ENCODE measurements at regions of chr9 and their contacts with region 1.

Region 1: GRCh38 chr9:32378993-32379729 is 5.3 kb upstream of the ACO1 start:
- DNase-seq: peak; percentile 86
- H3K4me3 ChIP-seq: no peak overlapping the region
- H3K27ac ChIP-seq: no peak overlapping the region
- H3K4me1 ChIP-seq: peaks cover 7% of the 10 kb centered on the region
- H3K27me3 ChIP-seq: peaks cover 13% of the 10 kb centered on the region
- CTCF ChIP-seq: peak; percentile 84

Region 2: DNA sequence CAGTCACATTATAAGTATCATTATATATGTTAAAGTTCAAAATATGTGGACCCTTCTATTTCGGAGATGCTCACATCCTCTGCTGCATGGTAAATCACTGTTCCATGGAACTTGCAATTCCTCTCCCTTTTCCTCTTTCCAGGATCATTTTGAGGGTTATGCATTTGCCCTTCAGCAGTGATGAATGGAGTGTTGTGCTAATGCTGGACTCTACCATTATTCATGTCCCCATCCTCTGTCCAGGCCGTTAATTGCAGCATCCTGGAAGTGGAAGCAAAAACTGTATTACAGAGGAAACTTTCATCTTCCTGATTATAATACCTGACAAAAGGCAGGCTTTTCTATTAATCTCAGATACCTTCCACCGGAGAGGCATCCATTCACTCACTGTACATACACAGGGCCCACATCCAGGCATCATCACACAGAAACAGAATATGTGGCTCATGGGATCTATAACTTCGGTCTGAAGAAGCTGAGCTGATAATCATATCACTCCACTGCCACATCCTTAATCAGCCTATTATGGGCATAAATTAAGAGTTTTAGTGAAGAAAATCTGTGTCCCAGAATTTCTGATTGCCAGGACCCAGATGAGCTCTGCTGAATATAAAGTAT is 59.7 kb before region 1 on chr9:
- CTCF ChIA-PET with region 1: no interaction called
- POLR2A ChIA-PET with region 1: no interaction called
- intact Hi-C with region 1: loop called (anchors 10 kb)
- DNase-seq: no peak
- H3K4me3 ChIP-seq: no peak overlapping the region
- H3K27ac ChIP-seq: no peak overlapping the region
- H3K4me1 ChIP-seq: no peaks in the 10 kb centered on the region
- H3K27me3 ChIP-seq: no peaks in the 10 kb centered on the region
- CTCF ChIP-seq: no peak

Region 3: GRCh38 chr9:32442433-32442832 is 63.3 kb after region 1 on chr9:
- CTCF ChIA-PET with region 1: no interaction called
- POLR2A ChIA-PET with region 1: no interaction called
- intact Hi-C with region 1: no loop called
- DNase-seq: no peak
- H3K4me3 ChIP-seq: no peak overlapping the region
- H3K27ac ChIP-seq: no peak overlapping the region
- H3K4me1 ChIP-seq: no peaks in the 10 kb centered on the region
- H3K27me3 ChIP-seq: no peaks in the 10 kb centered on the region
- CTCF ChIP-seq: no peak

Region 4: GRCh38 chr9:32526041-32526706 is 147.0 kb after region 1 on chr9 and contains the start of gene RIGI:
- CTCF ChIA-PET with region 1: interaction called, 32 read pairs
- POLR2A ChIA-PET with region 1: no interaction called
- intact Hi-C with region 1: loop called (anchors 2 kb)
- DNase-seq: peak; percentile 96
- H3K4me3 ChIP-seq: peak within 1 kb of the TSS; percentile 69
- H3K27ac ChIP-seq: peak within 1 kb of the TSS; percentile 73
- H3K4me1 ChIP-seq: peaks cover 13% of the 10 kb centered on the region
- H3K27me3 ChIP-seq: no peaks in the 10 kb centered on the region
- CTCF ChIP-seq: peak; percentile 70
- total RNA-seq, gene RIGI: 5.9 and 7.4 TPM in 2 replicates

Region 5: GRCh38 chr9:32579706-32580331 is 200.7 kb after region 1 on chr9:
- CTCF ChIA-PET with region 1: interaction called, 79 read pairs
- POLR2A ChIA-PET with region 1: no interaction called
- intact Hi-C with region 1: loop called (anchors 1 kb)
- DNase-seq: peak; percentile 61
- H3K4me3 ChIP-seq: no peak overlapping the region
- H3K27ac ChIP-seq: no peak overlapping the region
- H3K4me1 ChIP-seq: no peaks in the 10 kb centered on the region
- H3K27me3 ChIP-seq: no peaks in the 10 kb centered on the region
- CTCF ChIP-seq: peak; percentile 92

Region 6: DNA sequence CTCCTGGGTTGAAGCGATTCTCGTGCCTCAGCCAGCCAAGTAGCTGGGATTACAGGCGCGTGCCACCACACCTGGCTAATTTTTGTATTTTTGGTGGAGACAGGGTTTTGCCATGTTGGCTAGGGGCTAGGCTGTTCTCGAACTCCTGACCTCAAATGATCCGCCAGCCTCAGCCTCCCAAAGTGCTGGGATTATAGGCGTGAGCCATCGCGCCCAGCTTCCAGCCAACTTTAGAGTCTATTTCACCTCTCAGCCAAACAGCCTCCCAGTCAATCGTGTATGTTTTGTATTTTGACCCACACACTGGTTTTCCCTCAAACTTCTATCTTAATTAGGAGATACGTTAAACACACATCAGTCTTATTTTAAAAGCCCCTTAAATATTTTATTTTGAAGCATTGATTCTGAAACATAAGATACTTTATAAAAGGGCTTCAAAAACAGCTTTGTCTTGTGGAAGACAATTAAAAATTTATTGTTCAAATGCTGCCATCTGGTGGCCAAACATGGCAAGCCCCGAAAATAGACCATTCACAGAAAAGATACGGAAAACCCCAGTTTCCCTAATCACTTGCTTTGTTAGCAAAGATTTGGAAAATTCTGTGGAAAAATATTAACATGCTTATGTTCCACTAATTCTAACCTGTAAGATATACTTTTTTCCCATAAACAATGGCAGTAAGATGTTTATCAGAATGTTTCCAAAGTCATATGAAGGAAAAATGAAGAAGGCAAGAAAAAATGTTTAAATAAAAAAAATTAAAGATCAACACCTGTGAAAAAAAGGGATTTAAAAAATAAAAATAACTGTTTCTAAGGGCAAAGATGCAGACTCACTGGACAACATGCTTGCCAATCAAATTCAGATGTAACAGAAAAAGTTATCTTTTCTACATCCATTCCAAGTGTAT is 589.2 kb after region 1 on chr9:
- CTCF ChIA-PET with region 1: interaction called, 7 read pairs
- POLR2A ChIA-PET with region 1: no interaction called
- intact Hi-C with region 1: loop called (anchors 1 kb)
- DNase-seq: peak; percentile 57
- H3K4me3 ChIP-seq: no peak overlapping the region
- H3K27ac ChIP-seq: no peak overlapping the region
- H3K4me1 ChIP-seq: peaks cover 11% of the 10 kb centered on the region
- H3K27me3 ChIP-seq: no peaks in the 10 kb centered on the region
- CTCF ChIP-seq: peak; percentile 83

Measured in A673 (cell line).